Lower leg skin (tissue), 4 donors: ENCODE measurements at regions of chr1 and their contacts with region 1.

Region 1: GRCh38 chr1:7777591-7777990 is 6.5 kb downstream of the VAMP3 start:
- DNase-seq: no peak
- H3K4me3 ChIP-seq: no peak overlapping the region
- CTCF ChIP-seq: no peak
- POLR2A ChIP-seq: no peak

Region 2: DNA sequence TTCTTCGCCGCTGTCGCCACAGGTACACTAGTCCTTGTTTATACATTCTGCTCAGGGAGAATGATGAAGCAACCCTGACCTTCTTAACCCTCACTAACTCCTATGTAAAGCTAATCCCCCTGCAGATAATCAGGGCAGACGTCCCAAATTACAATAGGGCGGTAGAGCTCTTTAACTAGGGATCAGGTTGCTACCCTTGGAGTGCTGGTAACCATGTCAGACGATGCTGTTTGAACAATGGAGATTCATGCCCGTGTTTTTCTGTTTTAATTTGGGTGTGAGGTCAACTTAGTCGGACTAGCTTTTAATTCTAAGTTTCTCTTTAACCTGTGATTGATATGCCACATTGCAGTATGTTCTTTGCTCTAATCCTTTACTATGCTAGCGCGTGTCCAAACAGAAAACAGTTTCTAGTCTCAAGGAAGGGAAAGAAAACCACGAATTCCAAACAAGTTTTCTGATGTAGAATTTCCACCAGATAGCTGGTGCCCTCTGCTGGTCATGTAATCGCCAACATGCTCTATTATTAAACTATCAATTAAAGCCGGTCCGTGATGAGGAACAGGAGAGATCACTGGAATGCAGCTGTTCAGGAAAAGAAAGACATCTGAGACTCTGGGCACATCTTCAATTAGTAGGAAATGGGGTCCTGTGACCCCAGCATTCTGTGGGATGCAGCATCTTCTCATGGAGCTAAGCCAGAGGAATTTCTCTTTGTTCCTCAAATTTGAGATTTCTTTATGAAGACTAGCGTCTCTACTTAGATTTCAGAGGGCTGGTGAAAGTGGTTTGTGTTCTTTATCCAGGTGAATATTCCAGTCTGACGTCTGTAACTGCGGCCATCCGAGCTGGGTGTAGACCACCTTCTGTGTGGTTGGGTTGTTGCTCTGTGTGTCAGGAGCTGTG is 24.8 kb before region 1 on chr1:
- intact Hi-C with region 1: no loop called
- DNase-seq: peak in 1 of 2 donors; percentile 75
- H3K4me3 ChIP-seq: no peak overlapping the region
- CTCF ChIP-seq: peak in 1 of 3 donors; percentile 43
- POLR2A ChIP-seq: no peak

Region 3: GRCh38 chr1:9239622-9240401 is 1462.2 kb after region 1 on chr1:
- intact Hi-C with region 1: loop called (anchors 5 kb)
- DNase-seq: peak in 1 of 2 donors; percentile 45
- H3K4me3 ChIP-seq: no peak overlapping the region
- CTCF ChIP-seq: no peak
- POLR2A ChIP-seq: no peak